PC-9 (cell line): ENCODE measurements at regions of chr19 and their contacts with region 1.

Region 1: DNA sequence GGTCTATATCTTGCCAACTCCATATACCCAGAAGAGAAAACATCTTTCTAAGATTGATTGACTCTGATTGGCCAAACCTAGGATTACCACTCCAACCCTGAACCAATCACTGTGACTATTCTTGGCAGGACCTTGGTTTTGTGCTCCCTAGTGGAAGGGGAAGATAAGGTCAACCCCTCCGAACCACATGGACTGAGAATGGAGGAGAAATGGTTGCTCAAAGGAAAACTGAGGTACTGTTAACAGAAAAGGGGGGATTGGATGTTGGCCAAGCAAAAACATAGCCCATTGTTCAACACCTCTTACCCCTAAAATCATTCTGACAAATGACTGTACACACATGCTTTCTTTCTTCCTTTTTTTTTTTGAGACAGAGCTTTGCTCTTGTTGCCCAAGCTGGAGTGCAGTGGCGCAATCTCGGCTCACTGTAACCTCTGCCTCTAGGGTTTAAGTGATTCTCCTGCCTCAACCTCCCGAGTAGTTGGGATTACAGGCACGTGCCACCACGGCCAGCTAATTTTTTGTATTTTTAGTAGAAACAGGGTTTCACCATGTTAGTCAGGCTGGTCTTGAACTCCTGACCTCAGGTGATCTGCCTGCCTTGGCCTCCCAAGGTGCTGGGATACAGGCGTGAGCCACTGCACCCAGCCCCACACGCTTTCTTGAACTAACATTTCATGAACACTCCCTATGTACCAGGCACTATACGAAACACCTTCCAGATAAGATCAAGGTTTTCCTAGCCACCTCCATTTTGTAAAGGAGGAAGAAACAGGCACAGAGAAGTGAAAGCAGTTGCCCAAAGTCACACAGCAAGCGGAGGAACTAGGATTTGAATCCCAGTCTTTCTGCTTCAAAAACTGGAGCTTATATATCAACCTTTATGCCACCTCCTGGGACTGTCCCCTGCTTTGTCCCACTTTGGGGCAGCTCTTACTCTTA is 6.5 kb downstream of the MEIOSIN start:
- DNase-seq: no peak
- H3K4me3 ChIP-seq: no peak overlapping the region
- H3K27ac ChIP-seq: no peak overlapping the region
- H3K4me1 ChIP-seq: peaks cover 4% of the 10 kb centered on the region; the same call in 1 of the 2 replicates
- H3K27me3 ChIP-seq: no peaks in the 10 kb centered on the region
- CTCF ChIP-seq: no peak

Region 2: GRCh38 chr19:45763691-45764294 is 24.0 kb after region 1 on chr19:
- CTCF ChIA-PET with region 1: interaction called, 10 read pairs
- POLR2A ChIA-PET with region 1: no interaction called
- intact Hi-C with region 1: no loop called
- DNase-seq: no peak
- H3K4me3 ChIP-seq: no peak overlapping the region
- H3K27ac ChIP-seq: no peak overlapping the region
- H3K4me1 ChIP-seq: peaks cover 10% of the 10 kb centered on the region
- H3K27me3 ChIP-seq: no peaks in the 10 kb centered on the region
- CTCF ChIP-seq: no peak